ENCODE measurements at regions of chr12 and their contacts with region 1.

Region 1: GRCh38 chr12:26028953-26029735 is 70.7 kb downstream of the RASSF8 start:
- DNase-seq: peak in 1 of 2 donors; percentile 77
- H3K4me3 ChIP-seq: no peak overlapping the region
- H3K27ac ChIP-seq: peak overlapping the region in 1 of 5 donors; percentile 51
- H3K4me1 ChIP-seq: peaks cover 0 to 66% (median 34%) of the 10 kb centered on the region in 4 donors
- H3K27me3 ChIP-seq: no peaks in the 10 kb centered on the region
- CTCF ChIP-seq: peak in 5 of 7 experiments; percentile 12 to 78 (median 61)
- EP300 ChIP-seq: no peak
- POLR2A ChIP-seq: no peak

Region 2: DNA sequence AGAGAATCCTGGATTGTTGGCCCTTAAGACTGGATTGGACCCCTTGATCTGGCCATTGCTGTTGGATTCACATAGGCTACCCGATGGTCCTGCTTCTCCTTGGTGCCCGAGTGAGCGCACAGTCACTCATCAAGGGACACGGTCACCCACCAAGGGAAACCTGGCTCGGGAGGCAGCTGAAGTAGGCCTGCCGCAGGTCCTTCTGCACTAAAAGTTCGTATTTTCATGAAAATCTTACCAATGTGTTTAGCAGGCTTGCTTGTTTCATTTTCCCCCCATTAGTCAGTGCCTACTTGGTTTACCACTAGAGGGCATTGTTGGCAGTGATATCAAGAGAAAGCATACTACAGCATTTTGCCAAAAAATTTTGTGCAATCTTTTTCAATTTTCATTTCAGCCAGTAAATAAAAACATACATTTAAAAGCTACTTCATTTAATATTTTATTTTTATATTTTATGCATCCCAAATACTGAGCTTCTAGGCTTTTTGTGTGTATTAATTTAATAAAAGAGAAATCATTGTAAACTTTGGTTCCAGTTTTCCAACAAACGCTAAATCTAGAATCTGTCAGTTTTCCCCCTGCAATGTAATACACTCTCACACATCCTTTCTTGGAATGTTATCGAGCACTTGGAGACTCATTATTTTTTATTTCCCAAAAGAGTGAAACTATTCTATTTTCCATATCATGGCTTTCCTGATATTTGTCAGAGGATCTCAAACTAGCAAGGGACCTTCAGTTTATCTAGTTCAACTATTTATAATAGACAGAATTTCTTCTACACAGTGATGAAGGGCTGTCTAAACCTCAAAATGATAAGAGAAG is 592.7 kb before region 1 on chr12:
- intact Hi-C with region 1: loop called (anchors 10 kb)
- DNase-seq: peak in 1 of 2 donors; percentile 89
- H3K4me3 ChIP-seq: peak overlapping the region in 3 of 4 donors; percentile 30 to 38 (median 32)
- H3K27ac ChIP-seq: peak overlapping the region in 1 of 5 donors; percentile 45
- H3K4me1 ChIP-seq: peaks cover 0 to 30% (median 5%) of the 10 kb centered on the region in 4 donors
- H3K27me3 ChIP-seq: no peaks in the 10 kb centered on the region
- CTCF ChIP-seq: peak in 5 of 7 experiments; percentile 47 to 79 (median 73)
- EP300 ChIP-seq: no peak
- POLR2A ChIP-seq: no peak

Measured in stomach (tissue), 19 donors.